A549 (cell line): ENCODE measurements at regions of chr1 and their contacts with region 1.

Region 1: GRCh38 chr1:150256554-150257341 is 826 bp upstream of the CA14 start:
- DNase-seq: no peak
- ATAC-seq: no peak
- H3K4me3 ChIP-seq: no peak overlapping the region
- H3K27ac ChIP-seq: peak overlapping the region in 1 of 2 experiments; percentile 67; a peak in 4 of 6 replicates
- H3K4me1 ChIP-seq: peaks cover 9% of the 10 kb centered on the region; the same call in 1 of the 3 replicates
- CTCF ChIP-seq: no peak
- EP300 ChIP-seq: no peak
- POLR2A ChIP-seq: no peak
- RAD21 ChIP-seq: no peak

Region 2: DNA sequence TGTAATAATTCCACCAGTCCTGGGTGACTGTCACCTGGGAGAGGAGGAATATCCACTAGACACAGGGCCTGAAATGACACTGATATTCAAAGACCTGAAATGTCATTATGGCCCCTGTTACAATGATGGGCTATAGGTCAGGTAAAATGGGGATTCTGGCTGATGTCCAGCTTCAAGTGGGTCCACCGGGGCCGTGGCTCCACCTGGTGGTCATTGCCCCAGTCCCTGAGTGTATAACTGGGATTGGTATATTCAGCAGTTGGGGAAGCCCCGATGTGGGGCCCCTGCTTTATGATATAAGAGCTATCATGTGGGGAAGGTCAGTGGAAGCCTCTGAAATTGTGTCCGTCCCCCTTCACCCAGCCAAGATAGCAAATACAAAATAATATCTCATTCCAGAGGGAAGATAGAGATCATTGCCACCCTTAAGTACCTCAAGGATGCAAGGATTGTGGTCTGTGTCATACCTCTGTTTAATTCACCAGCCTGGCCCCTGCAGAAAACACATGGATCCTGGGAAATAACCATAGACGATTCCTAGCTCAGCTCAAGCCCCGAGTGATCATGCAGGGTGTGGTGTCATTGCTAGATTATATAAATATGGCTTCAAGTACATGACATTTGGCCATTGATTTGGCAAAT is 87.7 kb before region 1 on chr1:
- CTCF ChIA-PET with region 1: no interaction called
- POLR2A ChIA-PET with region 1: no interaction called
- DNase-seq: peak; percentile 65 to 92
- ATAC-seq: peak; percentile 76 to 89
- H3K4me3 ChIP-seq: no peak overlapping the region
- H3K27ac ChIP-seq: no peak overlapping the region
- H3K4me1 ChIP-seq: no peaks in the 10 kb centered on the region
- CTCF ChIP-seq: peak; percentile 88
- EP300 ChIP-seq: no peak
- POLR2A ChIP-seq: no peak
- RAD21 ChIP-seq: peak; percentile 87 to 90

Region 3: DNA sequence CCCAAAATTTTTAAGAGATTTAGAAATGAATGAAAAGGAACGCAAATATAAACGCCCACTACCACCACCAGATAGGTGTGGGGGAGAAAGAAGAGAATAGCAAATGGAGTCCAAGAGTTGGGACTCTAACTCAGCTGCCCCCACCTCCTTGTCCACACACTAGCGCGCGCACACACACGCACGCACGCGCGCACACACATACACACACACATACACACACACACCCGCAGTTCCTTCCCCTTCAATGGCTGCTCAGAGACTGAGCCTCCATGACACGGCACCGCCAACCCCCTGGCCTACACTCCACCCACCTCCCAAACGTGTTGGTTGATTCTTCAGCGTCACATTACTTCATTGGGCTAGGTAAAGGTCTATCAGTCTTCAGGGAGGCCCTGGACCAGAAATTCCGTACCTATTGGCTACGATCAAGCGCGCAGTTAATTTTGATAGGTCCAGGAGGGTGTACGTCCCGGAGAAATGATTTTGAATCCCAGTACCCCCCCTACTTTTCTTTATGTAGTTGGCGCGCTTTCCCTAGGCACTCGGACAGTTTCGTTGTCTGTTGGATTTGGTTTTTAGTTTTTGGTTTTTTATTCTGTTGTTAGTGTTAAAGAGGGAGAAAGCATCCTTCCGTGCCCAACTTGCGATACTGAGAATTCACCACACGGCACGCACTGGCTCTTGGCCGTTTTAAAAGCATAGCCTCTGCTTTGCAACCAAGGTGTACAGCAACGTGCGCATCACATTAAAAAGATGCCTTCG is 20.7 kb before region 1 on chr1 and contains the start of gene ANP32E:
- CTCF ChIA-PET with region 1: interaction called, 28 read pairs
- POLR2A ChIA-PET with region 1: no interaction called
- DNase-seq: peak; percentile 99 to 100
- ATAC-seq: peak; percentile 91
- H3K4me3 ChIP-seq: peak within 1 kb of the TSS; percentile 77
- H3K27ac ChIP-seq: peak within 1 kb of the TSS; percentile 87 to 98
- H3K4me1 ChIP-seq: peaks cover 15% of the 10 kb centered on the region
- CTCF ChIP-seq: no peak; the same call in 1 of the 3 replicates
- EP300 ChIP-seq: no peak
- POLR2A ChIP-seq: peak; percentile 96
- RAD21 ChIP-seq: no peak
- polyA plus RNA-seq, gene ANP32E: 31.7 and 60.0 TPM in 2 replicates

Region 4: DNA sequence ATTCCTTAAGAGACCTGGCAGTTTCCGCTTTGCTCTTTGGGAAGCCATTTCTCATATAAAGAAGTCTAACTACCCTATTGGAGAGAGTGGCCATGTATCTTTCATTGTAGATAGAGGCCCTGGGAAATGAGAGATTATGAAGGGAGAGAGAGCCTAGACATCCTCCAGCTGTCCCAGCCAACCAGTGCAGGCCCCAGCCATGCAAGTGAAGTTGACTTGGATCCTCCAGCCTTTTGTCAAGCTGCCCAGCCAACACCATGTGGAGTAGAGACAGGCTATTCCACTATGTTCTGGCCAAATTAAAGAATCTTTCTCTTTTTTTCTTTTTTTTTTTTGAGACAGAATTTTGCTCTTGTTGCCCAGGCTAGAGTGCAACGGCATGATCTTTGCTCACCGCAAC is 13.7 kb before region 1 on chr1:
- CTCF ChIA-PET with region 1: interaction called, 28 read pairs
- POLR2A ChIA-PET with region 1: no interaction called
- DNase-seq: no peak
- ATAC-seq: 0 out of 6 replicates have a peak, but pooled peaks of 1 of the 2 experiments have one; percentile 47
- H3K4me3 ChIP-seq: no peak overlapping the region
- H3K27ac ChIP-seq: no peak overlapping the region
- H3K4me1 ChIP-seq: no peaks in the 10 kb centered on the region
- CTCF ChIP-seq: no peak
- EP300 ChIP-seq: no peak
- POLR2A ChIP-seq: no peak
- RAD21 ChIP-seq: no peak

Region 5: GRCh38 chr1:150268705-150269403 is 12.1 kb after region 1 on chr1 and contains the start of gene APH1A:
- CTCF ChIA-PET with region 1: interaction called, 42 read pairs
- POLR2A ChIA-PET with region 1: interaction called, 5 read pairs
- DNase-seq: peak; percentile 97 to 99
- ATAC-seq: peak; percentile 98 to 100
- H3K4me3 ChIP-seq: peak within 1 kb of the TSS; percentile 91
- H3K27ac ChIP-seq: peak within 1 kb of the TSS; percentile 94
- H3K4me1 ChIP-seq: peaks cover 11% of the 10 kb centered on the region
- CTCF ChIP-seq: no peak
- EP300 ChIP-seq: no peak
- POLR2A ChIP-seq: no peak
- RAD21 ChIP-seq: no peak
- polyA plus RNA-seq, gene APH1A: 118 and 119 TPM in 2 replicates

Region 6: GRCh38 chr1:150281837-150282653 is 25.3 kb after region 1 on chr1 and contains the start of gene CIART:
- CTCF ChIA-PET with region 1: interaction called, 172 read pairs
- POLR2A ChIA-PET with region 1: interaction called, 5 read pairs
- DNase-seq: peak; percentile 93 to 97
- ATAC-seq: peak; percentile 96
- H3K4me3 ChIP-seq: peak within 1 kb of the TSS; percentile 52
- H3K27ac ChIP-seq: peak within 1 kb of the TSS; percentile 77 to 78
- H3K4me1 ChIP-seq: peaks cover 13% of the 10 kb centered on the region; the same call in 2 of the 3 replicates
- CTCF ChIP-seq: no peak
- EP300 ChIP-seq: no peak
- POLR2A ChIP-seq: peak; percentile 33
- RAD21 ChIP-seq: no peak
- polyA plus RNA-seq, gene CIART: 1.3 and 1.4 TPM in 2 replicates

Region 7: GRCh38 chr1:150995896-150996295 is 739.1 kb after region 1 on chr1:
- CTCF ChIA-PET with region 1: interaction called, 11 read pairs
- POLR2A ChIA-PET with region 1: no interaction called
- DNase-seq: no peak
- ATAC-seq: peak in 1 of 2 experiments; percentile 76; a peak in 3 of 6 replicates
- H3K4me3 ChIP-seq: no peak overlapping the region
- H3K27ac ChIP-seq: no peak overlapping the region
- H3K4me1 ChIP-seq: 0 out of 3 replicates have a peak, but pooled peaks cover 4% of the 10 kb centered on the region
- CTCF ChIP-seq: peak; percentile 89
- EP300 ChIP-seq: no peak
- POLR2A ChIP-seq: no peak
- RAD21 ChIP-seq: peak; percentile 75 to 86